AG04450 (cell line): ENCODE measurements at regions of chr7 and their contacts with region 1.

Region 1: GRCh38 chr7:85186521-85187241 is at the start of gene SEMA3D:
- DNase-seq: peak; percentile 70
- H3K4me3 ChIP-seq: peak within 1 kb of the TSS; percentile 80
- H3K27ac ChIP-seq: no peak within 1 kb of the TSS
- H3K27me3 ChIP-seq: no peaks in the 10 kb centered on the region
- CTCF ChIP-seq: peak; percentile 89
- polyA plus RNA-seq, gene SEMA3D: 5.7 and 7.4 TPM in 2 replicates

Region 2: DNA sequence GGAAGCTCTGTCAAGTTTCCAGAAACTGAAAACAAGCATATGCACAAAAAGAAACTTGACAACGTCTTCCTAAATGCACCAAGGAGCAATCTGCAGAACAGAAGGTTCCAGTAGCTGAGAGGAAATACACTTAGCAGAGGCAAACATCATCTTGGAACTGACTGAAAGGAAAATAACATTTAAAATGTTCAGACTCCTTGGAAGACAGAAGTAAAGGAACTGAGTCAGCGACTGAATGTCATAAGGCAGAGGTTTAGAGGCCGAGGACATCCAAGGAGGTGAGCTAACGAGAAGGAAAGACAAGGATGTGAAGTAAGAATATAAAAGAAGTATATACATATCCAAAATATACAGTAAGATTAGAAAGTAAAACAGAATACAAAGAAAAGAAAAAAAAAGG is 24.0 kb before region 1 on chr7:
- CTCF ChIA-PET with region 1: interaction called, 12 read pairs
- POLR2A ChIA-PET with region 1: no interaction called
- DNase-seq: no peak
- H3K4me3 ChIP-seq: no peak overlapping the region
- H3K27ac ChIP-seq: no peak overlapping the region
- H3K27me3 ChIP-seq: no peaks in the 10 kb centered on the region
- CTCF ChIP-seq: no peak